SK-N-SH (cell line): ENCODE measurements at regions of chr5 and their contacts with region 1.

Region 1: GRCh38 chr5:151651997-151652645 is 34.6 kb downstream of the SPARC start:
- DNase-seq: peak; percentile 82
- H3K4me3 ChIP-seq: peak overlapping the region in 1 of 2 experiments; percentile 1; a peak in 1 of 4 replicates
- H3K27ac ChIP-seq: no peak overlapping the region
- H3K4me1 ChIP-seq: no peaks in the 10 kb centered on the region
- H3K27me3 ChIP-seq: peaks cover under 1% of the 10 kb centered on the region; the same call in 1 of the 2 replicates
- CTCF ChIP-seq: peak; percentile 80
- EP300 ChIP-seq: no peak
- RAD21 ChIP-seq: peak; percentile 96

Region 2: GRCh38 chr5:151490627-151491026 is 161.5 kb before region 1 on chr5:
- CTCF ChIA-PET with region 1: interaction called, 10 read pairs
- POLR2A ChIA-PET with region 1: no interaction called
- DNase-seq: no peak
- H3K4me3 ChIP-seq: no peak overlapping the region
- H3K27ac ChIP-seq: no peak overlapping the region
- H3K4me1 ChIP-seq: no peaks in the 10 kb centered on the region
- H3K27me3 ChIP-seq: no peaks in the 10 kb centered on the region
- CTCF ChIP-seq: no peak
- EP300 ChIP-seq: no peak
- RAD21 ChIP-seq: no peak

Region 3: DNA sequence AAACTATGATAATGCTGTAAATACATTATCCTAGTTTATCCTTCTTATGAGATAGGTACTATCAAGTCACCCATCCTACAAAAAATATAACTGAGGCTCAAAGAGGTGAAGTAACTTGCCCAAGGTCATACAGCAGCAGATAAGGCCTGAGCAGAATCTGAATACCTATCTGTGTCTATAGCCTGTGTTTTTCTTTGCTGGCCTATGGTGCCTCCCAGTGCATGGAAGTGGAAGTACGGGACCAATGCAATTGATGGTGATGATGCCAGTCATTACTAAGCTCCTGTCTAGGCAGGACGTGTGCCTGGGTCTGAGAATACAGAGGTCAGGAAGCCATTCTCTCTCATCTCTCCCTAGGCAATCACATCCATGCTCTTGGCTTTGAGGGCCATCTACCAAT is 128.8 kb before region 1 on chr5:
- CTCF ChIA-PET with region 1: interaction called, 54 read pairs
- POLR2A ChIA-PET with region 1: no interaction called
- DNase-seq: peak; percentile 72
- H3K4me3 ChIP-seq: no peak overlapping the region
- H3K27ac ChIP-seq: no peak overlapping the region
- H3K4me1 ChIP-seq: no peaks in the 10 kb centered on the region
- H3K27me3 ChIP-seq: peaks cover 10% of the 10 kb centered on the region; the same call in 1 of the 2 replicates
- CTCF ChIP-seq: peak; percentile 65
- EP300 ChIP-seq: no peak
- RAD21 ChIP-seq: peak; percentile 83

Region 4: DNA sequence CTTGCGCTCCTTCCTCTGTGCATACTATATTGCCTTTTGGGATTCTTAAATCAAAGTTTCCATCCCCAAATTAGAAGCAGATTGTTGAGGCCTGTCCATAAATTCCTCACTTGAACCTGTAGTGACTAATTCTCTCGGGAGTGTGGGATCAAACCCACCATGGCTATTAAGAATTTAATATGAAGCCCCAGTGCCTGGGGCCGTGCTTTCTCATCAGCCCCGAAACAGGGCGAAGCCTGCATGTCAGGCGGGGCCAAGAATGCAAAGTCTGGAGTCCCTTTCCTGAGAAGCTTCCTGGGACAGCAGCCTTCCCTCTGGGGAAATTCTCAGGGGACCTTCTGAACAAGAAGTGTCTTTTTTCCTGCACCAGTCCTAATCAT is 31.7 kb before region 1 on chr5:
- CTCF ChIA-PET with region 1: no interaction called
- POLR2A ChIA-PET with region 1: no interaction called
- DNase-seq: no peak
- H3K4me3 ChIP-seq: no peak overlapping the region
- H3K27ac ChIP-seq: no peak overlapping the region
- H3K4me1 ChIP-seq: no peaks in the 10 kb centered on the region
- H3K27me3 ChIP-seq: 0 out of 2 replicates have a peak, but pooled peaks cover 8% of the 10 kb centered on the region
- CTCF ChIP-seq: no peak
- EP300 ChIP-seq: no peak
- RAD21 ChIP-seq: no peak

Region 5: GRCh38 chr5:151637676-151638075 is 14.4 kb before region 1 on chr5:
- CTCF ChIA-PET with region 1: interaction called, 16 read pairs
- POLR2A ChIA-PET with region 1: no interaction called
- DNase-seq: no peak
- H3K4me3 ChIP-seq: no peak overlapping the region
- H3K27ac ChIP-seq: no peak overlapping the region
- H3K4me1 ChIP-seq: no peaks in the 10 kb centered on the region
- H3K27me3 ChIP-seq: peaks cover 29% of the 10 kb centered on the region; the same call in 1 of the 2 replicates
- CTCF ChIP-seq: no peak
- EP300 ChIP-seq: no peak
- RAD21 ChIP-seq: no peak

Region 6: GRCh38 chr5:151751091-151751490 is 99.0 kb after region 1 on chr5:
- CTCF ChIA-PET with region 1: interaction called, 375 read pairs
- POLR2A ChIA-PET with region 1: no interaction called
- DNase-seq: no peak
- H3K4me3 ChIP-seq: no peak overlapping the region
- H3K27ac ChIP-seq: no peak overlapping the region
- H3K4me1 ChIP-seq: no peaks in the 10 kb centered on the region
- H3K27me3 ChIP-seq: no peaks in the 10 kb centered on the region
- CTCF ChIP-seq: no peak
- EP300 ChIP-seq: no peak
- RAD21 ChIP-seq: no peak